Mammary epithelial cell (primary cell): ENCODE measurements at regions of chrX and their contacts with region 1.

Region 1: GRCh38 chrX:115957862-115958483 is 212.6 kb upstream of the AGTR2 start:
- DNase-seq: no peak
- H3K4me3 ChIP-seq: no peak overlapping the region
- H3K27ac ChIP-seq: no peak overlapping the region
- H3K4me1 ChIP-seq: no peaks in the 10 kb centered on the region
- H3K27me3 ChIP-seq: no peaks in the 10 kb centered on the region
- CTCF ChIP-seq: peak; percentile 9 to 20

Region 2: DNA sequence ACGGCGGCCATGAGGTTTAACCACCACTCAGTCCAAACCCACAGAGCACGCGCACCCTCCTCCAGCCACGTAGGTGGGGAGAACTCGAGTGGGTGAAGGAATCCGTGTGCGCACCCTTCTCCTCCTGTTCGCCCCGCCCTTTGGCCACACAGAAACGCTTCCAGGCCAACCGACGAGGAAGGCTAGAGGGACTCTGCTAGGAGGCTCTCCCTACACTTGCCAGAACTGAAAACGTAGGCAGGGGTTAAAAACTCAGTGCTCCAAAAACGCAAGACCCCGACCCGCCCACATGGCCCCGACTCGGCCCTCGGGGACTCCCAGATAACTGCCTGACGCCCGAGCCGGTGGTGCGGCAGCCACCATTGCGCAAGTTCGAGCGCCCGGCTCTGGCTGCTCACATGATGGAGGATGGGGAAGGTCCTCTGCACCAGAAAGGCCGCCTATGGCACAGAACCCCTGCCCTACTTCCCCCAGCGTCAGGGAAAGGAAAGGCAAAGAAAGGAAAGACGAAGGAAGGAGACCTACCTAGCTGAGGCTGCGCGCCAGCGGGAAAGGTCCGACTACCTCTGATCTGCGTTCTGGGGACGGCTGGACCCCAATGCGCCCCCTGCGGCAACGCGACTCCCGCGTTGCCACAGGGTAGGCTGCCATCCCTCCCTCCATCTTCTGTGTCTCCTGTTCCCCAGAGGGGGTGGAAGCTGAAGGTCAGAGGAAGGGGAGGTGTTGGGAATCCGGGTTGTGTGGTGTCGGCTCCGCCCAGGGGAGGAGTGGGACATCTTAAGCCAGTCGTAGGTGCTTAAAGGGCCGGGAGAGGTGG is 10.7 kb after region 1 on chrX:
- CTCF ChIA-PET with region 1: interaction called, 13 read pairs
- dilution Hi-C with region 1: no loop called
- in situ Hi-C with region 1: no loop called
- intact Hi-C with region 1: no loop called
- DNase-seq: peak; percentile 45
- H3K4me3 ChIP-seq: peak overlapping the region; percentile 47 to 58 (median 58)
- H3K27ac ChIP-seq: peak overlapping the region; percentile 6
- H3K4me1 ChIP-seq: no peaks in the 10 kb centered on the region
- H3K27me3 ChIP-seq: no peaks in the 10 kb centered on the region
- CTCF ChIP-seq: no peak